ENCODE measurements at regions of chr7 and their contacts with region 1.

Region 1: GRCh38 chr7:82625377-82625776 is 181.8 kb upstream of the CACNA2D1 start:
- DNase-seq: no peak
- H3K4me3 ChIP-seq: no peak overlapping the region
- H3K27ac ChIP-seq: no peak overlapping the region
- H3K4me1 ChIP-seq: no peaks in the 10 kb centered on the region
- H3K27me3 ChIP-seq: no peaks in the 10 kb centered on the region
- CTCF ChIP-seq: no peak
- EP300 ChIP-seq: no peak
- POLR2A ChIP-seq: no peak

Region 2: GRCh38 chr7:82534683-82535082 is 90.7 kb before region 1 on chr7:
- in situ Hi-C with region 1: loop called in 1 of 4 experiments (anchors 25 kb)
- intact Hi-C with region 1: no loop called
- DNase-seq: no peak
- H3K4me3 ChIP-seq: no peak overlapping the region
- H3K27ac ChIP-seq: no peak overlapping the region
- H3K4me1 ChIP-seq: no peaks in the 10 kb centered on the region
- H3K27me3 ChIP-seq: no peaks in the 10 kb centered on the region
- CTCF ChIP-seq: no peak
- EP300 ChIP-seq: no peak
- POLR2A ChIP-seq: no peak

Measured in transverse colon (tissue), 4 donors.